ENCODE measurements at regions of chr1 and their contacts with region 1.

Region 1: DNA sequence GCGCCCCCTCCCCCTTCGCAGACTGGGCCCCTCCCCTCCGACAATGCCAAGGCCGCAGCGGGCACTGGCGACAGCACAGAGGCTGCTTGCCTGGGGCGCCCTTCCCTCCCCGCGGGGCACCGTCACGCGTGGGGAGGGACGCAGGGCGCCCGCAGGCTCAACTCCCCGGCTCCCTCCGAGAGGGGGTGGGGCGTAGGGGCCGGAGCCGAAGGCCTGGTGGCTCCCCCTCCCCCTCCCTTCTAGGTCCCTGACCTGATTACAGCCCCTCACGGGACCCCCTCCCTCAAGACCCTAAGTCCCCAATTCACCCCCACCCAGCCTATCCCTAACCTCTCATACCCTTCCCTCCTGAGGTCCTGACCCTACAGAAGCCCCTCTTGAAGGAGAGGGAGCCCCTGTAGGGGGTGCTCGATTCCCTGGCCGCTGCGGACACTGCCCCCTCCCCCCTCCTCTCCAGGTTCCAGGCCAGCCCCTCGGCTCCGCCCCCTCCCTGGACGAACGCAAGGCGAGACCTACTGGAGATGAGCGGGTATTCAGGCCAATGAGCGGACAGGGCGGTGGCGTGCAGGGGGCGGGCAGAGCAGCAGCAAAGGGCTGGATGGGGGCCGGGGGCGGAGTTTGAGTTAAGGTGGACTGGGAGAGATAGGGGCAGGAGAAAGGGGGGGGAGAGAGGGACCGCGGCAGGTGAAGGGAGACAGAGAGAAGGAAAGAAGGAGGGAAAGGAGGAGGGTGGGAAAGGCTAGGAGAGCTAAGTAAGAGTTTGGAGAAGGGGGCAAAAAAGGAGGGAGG is 733 bp upstream of the ZBTB7B start:
- DNase-seq: peak; percentile 89 to 98 (median 92)
- ATAC-seq: peak; percentile 71 to 80
- H3K4me3 Mint-ChIP-seq: peak overlapping the region; percentile 82 to 94 (median 90)
- H3K27ac Mint-ChIP-seq: peak overlapping the region; percentile 66 to 92 (median 87)
- H3K4me1 Mint-ChIP-seq: peaks cover 34 to 80% (median 57%) of the 10 kb centered on the region in 4 donors
- H3K27me3 Mint-ChIP-seq: peaks cover 0 to 6% (median 0%) of the 10 kb centered on the region in 5 donors

Region 2: GRCh38 chr1:154974063-154974807 is 27.6 kb before region 1 on chr1 and contains the start of gene CKS1B:
- POLR2A ChIA-PET with region 1: interaction called, 25 read pairs
- DNase-seq: peak; percentile 86 to 99 (median 98)
- ATAC-seq: peak; percentile 88 to 90
- H3K4me3 Mint-ChIP-seq: no peak within 1 kb of the TSS
- H3K27ac Mint-ChIP-seq: no peak within 1 kb of the TSS
- H3K4me1 Mint-ChIP-seq: peaks cover 16 to 33% (median 30%) of the 10 kb centered on the region in 4 donors
- H3K27me3 Mint-ChIP-seq: no peaks in the 10 kb centered on the region
- polyA plus RNA-seq, gene CKS1B: 58.0 to 66.6 (median 63.0) TPM

Region 3: DNA sequence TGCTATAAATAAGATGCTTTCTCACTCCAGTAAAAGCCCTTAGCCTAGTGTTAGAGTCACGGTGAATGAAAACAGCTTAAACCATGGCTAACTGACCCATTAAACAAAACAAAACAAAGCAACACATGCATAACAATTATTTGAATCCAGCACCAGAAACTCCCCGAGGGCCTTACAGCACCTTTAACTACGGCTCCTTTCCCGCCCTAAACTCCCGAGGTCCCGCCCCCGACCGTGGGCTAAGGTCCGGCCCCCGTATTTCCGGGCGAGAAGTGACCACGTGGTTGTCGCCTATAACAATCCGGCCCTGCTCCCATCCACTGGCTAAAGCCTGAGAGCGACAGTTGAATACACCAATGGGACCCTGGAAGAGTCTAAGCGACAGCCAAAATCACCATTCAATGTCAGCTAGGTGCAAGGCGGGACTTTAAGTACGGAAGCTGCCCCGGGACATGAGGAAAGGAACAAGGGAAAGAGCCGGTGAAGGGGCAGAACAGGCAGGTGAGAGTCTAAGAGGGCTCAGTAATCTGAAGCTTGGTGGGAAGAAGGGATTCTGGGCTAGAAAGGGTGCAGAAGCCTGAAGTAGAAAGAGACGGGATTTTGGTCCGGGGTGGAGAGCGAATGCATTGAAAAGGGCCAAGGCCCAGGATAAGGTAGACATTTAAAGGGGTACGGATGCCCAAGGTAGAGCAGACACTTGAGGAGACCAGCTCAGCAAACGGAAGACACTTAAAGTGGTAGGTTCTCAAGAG is 18.8 kb before region 1 on chr1 and contains the start of gene FLAD1:
- POLR2A ChIA-PET with region 1: interaction called, 25 read pairs
- DNase-seq: peak; percentile 84 to 98 (median 94)
- ATAC-seq: peak; percentile 99 to 100
- H3K4me3 Mint-ChIP-seq: no peak within 1 kb of the TSS
- H3K27ac Mint-ChIP-seq: peak within 1 kb of the TSS in 1 of 10 donors; percentile 63
- H3K4me1 Mint-ChIP-seq: peaks cover 0 to 21% (median 2%) of the 10 kb centered on the region in 4 donors
- H3K27me3 Mint-ChIP-seq: no peaks in the 10 kb centered on the region
- polyA plus RNA-seq, gene FLAD1: 30.9 to 41.8 (median 31.9) TPM

Measured in naive thymus-derived CD8-positive, alpha-beta T cell (primary cell).